ENCODE measurements at regions of chr15 and their contacts with region 1.

Region 1: GRCh38 chr15:74787251-74788041 is 5.6 kb downstream of the CSK start:
- DNase-seq: peak; percentile 80
- ATAC-seq: peak; percentile 82
- H3K4me3 Mint-ChIP-seq: no peak overlapping the region
- H3K27ac Mint-ChIP-seq: no peak overlapping the region
- H3K4me1 Mint-ChIP-seq: peaks cover 49% of the 10 kb centered on the region
- H3K27me3 Mint-ChIP-seq: no peaks in the 10 kb centered on the region; the same call in 1 of the 2 replicates
- CTCF ChIP-seq: peak; percentile 35

Region 2: GRCh38 chr15:74763416-74763815 is 24.0 kb before region 1 on chr15:
- CTCF ChIA-PET with region 1: interaction called, 360 read pairs
- POLR2A ChIA-PET with region 1: interaction called, 7 read pairs
- DNase-seq: no peak
- ATAC-seq: no peak
- H3K4me3 Mint-ChIP-seq: no peak overlapping the region
- H3K27ac Mint-ChIP-seq: no peak overlapping the region
- H3K4me1 Mint-ChIP-seq: peaks cover 20% of the 10 kb centered on the region
- H3K27me3 Mint-ChIP-seq: peaks cover 3% of the 10 kb centered on the region; the same call in 1 of the 2 replicates
- CTCF ChIP-seq: no peak

Region 3: DNA sequence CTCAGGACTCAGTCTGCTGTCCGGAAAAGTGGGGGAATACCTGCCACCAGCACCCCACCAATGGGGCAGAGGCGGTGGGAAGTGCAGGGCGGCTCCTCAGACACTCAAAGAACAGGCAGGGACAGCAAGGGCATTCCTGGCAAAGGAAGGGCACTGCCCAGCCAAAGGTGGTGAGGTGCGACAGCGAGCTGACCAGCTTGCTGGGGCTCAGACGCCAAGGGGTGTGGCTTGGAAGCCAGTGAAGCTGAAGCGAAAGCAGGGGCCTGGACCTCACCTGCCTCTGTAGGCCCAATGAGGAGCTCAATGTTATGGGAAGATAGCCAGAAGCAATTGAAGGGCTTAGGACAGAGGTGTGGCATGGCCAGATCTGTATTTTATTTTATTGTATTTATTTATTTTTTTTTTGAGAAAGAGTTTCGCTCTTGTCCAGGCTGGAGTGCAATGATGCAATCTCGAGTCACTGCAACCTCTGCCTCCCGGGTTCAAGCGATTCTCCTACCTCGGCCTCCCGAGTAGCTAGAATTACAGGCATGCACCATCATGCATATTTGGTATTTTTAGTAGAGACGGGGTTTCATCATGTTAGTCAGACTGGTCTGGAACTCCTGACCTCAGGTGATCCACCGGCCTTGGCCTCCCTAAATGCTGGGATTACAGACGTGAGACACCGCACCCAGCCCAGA is 20.8 kb after region 1 on chr15:
- CTCF ChIA-PET with region 1: interaction called, 40 read pairs
- POLR2A ChIA-PET with region 1: interaction called, 3 read pairs
- DNase-seq: no peak
- ATAC-seq: no peak
- H3K4me3 Mint-ChIP-seq: no peak overlapping the region
- H3K27ac Mint-ChIP-seq: no peak overlapping the region
- H3K4me1 Mint-ChIP-seq: peaks cover 6% of the 10 kb centered on the region
- H3K27me3 Mint-ChIP-seq: no peaks in the 10 kb centered on the region
- CTCF ChIP-seq: no peak

Region 4: GRCh38 chr15:74826364-74826819 is 38.9 kb after region 1 on chr15 and contains the start of gene CPLX3:
- CTCF ChIA-PET with region 1: interaction called, 26 read pairs
- POLR2A ChIA-PET with region 1: no interaction called
- DNase-seq: peak; percentile 58
- ATAC-seq: peak; percentile 55
- H3K4me3 Mint-ChIP-seq: peak within 1 kb of the TSS; percentile 47
- H3K27ac Mint-ChIP-seq: no peak within 1 kb of the TSS
- H3K4me1 Mint-ChIP-seq: peaks cover 11% of the 10 kb centered on the region
- H3K27me3 Mint-ChIP-seq: peaks cover 57% of the 10 kb centered on the region
- CTCF ChIP-seq: no peak
- total RNA-seq, gene CPLX3: 0.09 to 0.21 TPM (median 0.09 TPM) in 3 replicates